ENCODE measurements at regions of chr5 and their contacts with region 1.

Region 1: DNA sequence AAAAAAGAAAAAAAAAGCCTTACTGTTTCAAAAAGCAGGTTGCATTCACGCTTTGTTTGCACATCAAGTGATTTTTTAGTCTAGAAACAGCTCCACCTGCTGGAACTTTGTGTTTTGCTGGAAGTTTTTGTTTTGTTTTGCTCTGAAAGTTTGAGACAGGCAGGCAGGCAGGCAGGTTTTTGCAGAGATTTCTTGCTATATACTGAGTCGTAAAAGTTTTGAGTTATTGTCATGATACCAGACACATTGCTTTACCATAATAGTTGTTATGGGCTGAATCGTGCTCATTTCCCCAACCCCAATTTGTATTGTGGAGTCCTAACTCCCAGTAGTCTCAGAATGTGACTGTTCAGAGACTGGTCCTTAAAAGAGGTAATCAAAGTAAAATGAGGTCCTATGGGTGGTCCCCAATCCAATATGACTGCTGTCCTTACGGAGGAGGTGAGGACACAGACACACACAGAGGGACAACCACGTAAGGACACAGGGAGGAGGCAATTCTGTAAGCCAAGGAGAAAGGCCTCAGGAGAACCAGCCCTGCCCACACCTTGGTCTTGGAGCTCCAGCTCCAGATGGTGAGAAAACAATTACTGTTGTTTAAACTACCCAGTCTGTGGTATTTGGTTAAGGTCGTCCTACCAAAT is 20.9 kb downstream of the OR2Y1 start:
- DNase-seq: no peak
- ATAC-seq: peak; percentile 64
- H3K4me3 ChIP-seq: no peak overlapping the region
- H3K27ac ChIP-seq: no peak overlapping the region
- H3K4me1 ChIP-seq: peaks cover 9% of the 10 kb centered on the region
- H3K27me3 ChIP-seq: no peaks in the 10 kb centered on the region
- CTCF ChIP-seq: peak; percentile 47 to 66 (median 59)
- EP300 ChIP-seq: no peak
- POLR2A ChIP-seq: no peak
- RAD21 ChIP-seq: peak; percentile 49

Region 2: DNA sequence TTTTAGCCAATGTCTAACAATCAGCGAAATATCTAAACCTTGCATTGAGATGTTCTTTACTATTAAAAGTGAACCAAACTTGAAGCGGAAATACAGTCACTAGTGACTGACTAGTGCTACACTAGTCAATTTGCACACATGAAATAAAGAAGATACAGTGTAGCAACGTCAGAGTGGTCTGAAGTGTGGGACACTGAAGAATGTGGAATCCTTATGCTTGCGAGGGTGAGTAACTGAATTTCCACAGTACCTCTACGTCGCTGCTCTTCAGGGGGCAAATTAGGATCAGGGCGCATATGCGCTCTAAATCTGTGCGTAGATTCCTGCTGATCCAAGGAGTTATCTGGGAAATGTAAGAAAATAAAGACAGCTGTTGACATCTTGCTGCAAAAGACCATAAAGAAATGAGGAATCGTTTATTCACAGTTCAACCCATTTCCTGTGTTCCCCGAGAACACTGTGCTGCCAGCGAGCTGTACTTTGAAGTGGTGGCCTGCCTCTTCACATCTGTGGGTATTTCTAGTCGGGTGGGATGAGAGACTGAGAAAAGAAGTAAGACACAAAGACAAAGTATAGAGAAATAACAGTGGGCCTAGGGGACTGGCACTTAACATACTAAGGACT is 29.7 kb before region 1 on chr5:
- CTCF ChIA-PET with region 1: interaction called, 15 read pairs
- POLR2A ChIA-PET with region 1: no interaction called
- RAD21 ChIA-PET with region 1: no interaction called
- SMC1A ChIA-PET with region 1: interaction called, 4 read pairs
- in situ Hi-C with region 1: no loop called
- intact Hi-C with region 1: no loop called
- DNase-seq: no peak
- ATAC-seq: no peak
- H3K4me3 ChIP-seq: no peak overlapping the region
- H3K27ac ChIP-seq: no peak overlapping the region
- H3K4me1 ChIP-seq: no peaks in the 10 kb centered on the region
- H3K27me3 ChIP-seq: no peaks in the 10 kb centered on the region; a peak in 1 of 4 replicates
- CTCF ChIP-seq: no peak
- EP300 ChIP-seq: no peak
- POLR2A ChIP-seq: no peak
- RAD21 ChIP-seq: no peak

Region 3: DNA sequence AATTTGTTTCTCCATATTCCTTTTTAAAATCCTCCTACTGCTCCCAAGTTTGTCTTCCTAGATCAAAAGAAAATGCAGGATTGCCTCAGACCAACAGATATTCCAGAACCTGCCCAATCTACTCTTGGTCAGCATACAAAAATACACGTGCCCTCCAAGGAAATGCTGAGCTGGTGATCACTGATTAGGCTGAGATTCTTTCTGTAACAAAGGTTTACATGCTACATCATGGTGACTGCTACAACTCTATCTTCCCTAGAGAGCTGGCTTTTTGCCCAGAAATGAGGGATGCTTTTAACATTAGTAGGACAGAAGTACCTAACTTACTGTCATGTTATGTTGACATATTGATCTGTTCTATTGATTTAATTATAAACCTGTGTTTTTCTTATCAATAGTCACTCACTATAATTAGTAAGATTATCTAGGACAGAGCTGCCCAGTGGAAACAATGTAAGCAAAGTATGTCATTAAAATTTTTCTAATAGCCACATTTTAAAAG is 14.5 kb before region 1 on chr5:
- CTCF ChIA-PET with region 1: interaction called, 12 read pairs
- POLR2A ChIA-PET with region 1: no interaction called
- RAD21 ChIA-PET with region 1: no interaction called
- SMC1A ChIA-PET with region 1: interaction called, 3 read pairs
- in situ Hi-C with region 1: no loop called
- intact Hi-C with region 1: no loop called
- DNase-seq: no peak
- ATAC-seq: no peak
- H3K4me3 ChIP-seq: no peak overlapping the region
- H3K27ac ChIP-seq: no peak overlapping the region
- H3K4me1 ChIP-seq: no peaks in the 10 kb centered on the region
- H3K27me3 ChIP-seq: no peaks in the 10 kb centered on the region
- CTCF ChIP-seq: no peak
- EP300 ChIP-seq: no peak
- POLR2A ChIP-seq: no peak
- RAD21 ChIP-seq: no peak